Heart left ventricle (tissue), 16 donors: ENCODE measurements at regions of chr13 and their contacts with region 1.

Region 1: GRCh38 chr13:44961997-44962396 is 27.3 kb downstream of the NUFIP1 start:
- DNase-seq: no peak
- ATAC-seq: no peak
- H3K4me3 ChIP-seq: no peak overlapping the region
- H3K27ac ChIP-seq: no peak overlapping the region
- H3K4me1 ChIP-seq: no peaks in the 10 kb centered on the region
- H3K27me3 ChIP-seq: no peaks in the 10 kb centered on the region
- CTCF ChIP-seq: no peak
- POLR2A ChIP-seq: no peak

Region 2: GRCh38 chr13:44929692-44930091 is 32.3 kb before region 1 on chr13:
- intact Hi-C with region 1: loop called in 2 of 10 experiments (anchors 5 kb)
- DNase-seq: no peak
- ATAC-seq: no peak
- H3K4me3 ChIP-seq: no peak overlapping the region
- H3K27ac ChIP-seq: no peak overlapping the region
- H3K4me1 ChIP-seq: peaks cover 0 to 40% (median 13%) of the 10 kb centered on the region in 12 donors
- H3K27me3 ChIP-seq: no peaks in the 10 kb centered on the region
- CTCF ChIP-seq: no peak
- POLR2A ChIP-seq: no peak

Region 3: DNA sequence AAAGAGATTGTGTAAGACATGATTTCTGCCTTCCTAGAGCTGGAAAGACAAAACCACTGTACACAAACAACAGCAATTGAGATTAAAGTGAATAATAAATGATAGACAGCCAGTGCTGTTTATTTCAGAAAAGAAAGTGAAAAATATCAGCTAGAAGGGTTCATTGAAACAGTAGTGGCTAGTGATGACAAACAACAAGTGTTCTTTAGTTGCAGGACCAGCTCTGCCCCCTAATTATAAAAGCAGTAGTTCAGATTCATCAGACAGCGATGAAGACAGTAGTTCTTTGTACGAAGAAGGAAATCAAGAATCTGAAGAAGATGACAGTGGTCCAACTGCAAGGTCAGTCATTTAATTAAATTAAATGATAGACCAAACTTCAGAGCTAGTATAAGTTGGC is 42.1 kb after region 1 on chr13:
- intact Hi-C with region 1: no loop called
- DNase-seq: no peak
- ATAC-seq: no peak
- H3K4me3 ChIP-seq: no peak overlapping the region
- H3K27ac ChIP-seq: no peak overlapping the region
- H3K4me1 ChIP-seq: peaks cover 0 to 10% (median 0%) of the 10 kb centered on the region in 12 donors
- H3K27me3 ChIP-seq: no peaks in the 10 kb centered on the region
- CTCF ChIP-seq: no peak
- POLR2A ChIP-seq: no peak